WTC11 (cell line): ENCODE measurements at regions of chr11 and their contacts with region 1.

Region 1: DNA sequence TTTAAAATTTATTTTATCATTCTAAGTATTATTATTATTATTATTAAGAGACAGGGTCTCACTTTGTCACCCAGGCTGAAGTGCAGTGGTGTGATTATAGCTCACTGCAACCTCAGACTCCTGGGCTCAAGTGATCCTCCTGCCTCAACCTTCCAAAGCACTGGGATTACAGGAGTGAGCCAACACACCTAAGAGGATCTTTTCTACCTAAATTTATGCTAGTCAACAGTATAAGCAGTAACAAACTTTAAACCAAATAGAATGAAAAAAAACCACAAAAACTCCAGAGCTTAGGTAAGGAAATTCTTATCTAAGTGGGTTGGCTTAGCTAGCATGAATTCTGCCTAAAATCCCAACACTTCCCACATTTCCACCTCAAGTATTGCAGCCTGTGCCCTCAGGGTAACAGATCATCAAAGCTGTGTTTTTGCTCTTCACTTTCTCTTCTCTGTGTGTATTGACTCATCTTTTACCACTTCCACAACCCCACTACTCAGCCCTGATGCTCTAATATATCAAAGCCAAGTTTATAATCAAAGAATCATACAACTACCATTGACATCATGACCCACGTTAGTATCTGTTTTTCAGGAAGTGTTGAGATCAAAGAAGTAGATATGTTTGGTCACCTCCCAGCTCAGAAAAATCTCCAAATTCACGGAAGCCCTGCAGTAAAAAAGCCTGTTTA is 93.7 kb upstream of the SPON1 start:
- DNase-seq: no peak
- ATAC-seq: no peak
- H3K4me3 Mint-ChIP-seq: no peak overlapping the region
- H3K27ac Mint-ChIP-seq: no peak overlapping the region
- H3K4me1 Mint-ChIP-seq: peaks cover 9% of the 10 kb centered on the region
- H3K27me3 Mint-ChIP-seq: no peaks in the 10 kb centered on the region
- CTCF ChIP-seq: no peak

Region 2: DNA sequence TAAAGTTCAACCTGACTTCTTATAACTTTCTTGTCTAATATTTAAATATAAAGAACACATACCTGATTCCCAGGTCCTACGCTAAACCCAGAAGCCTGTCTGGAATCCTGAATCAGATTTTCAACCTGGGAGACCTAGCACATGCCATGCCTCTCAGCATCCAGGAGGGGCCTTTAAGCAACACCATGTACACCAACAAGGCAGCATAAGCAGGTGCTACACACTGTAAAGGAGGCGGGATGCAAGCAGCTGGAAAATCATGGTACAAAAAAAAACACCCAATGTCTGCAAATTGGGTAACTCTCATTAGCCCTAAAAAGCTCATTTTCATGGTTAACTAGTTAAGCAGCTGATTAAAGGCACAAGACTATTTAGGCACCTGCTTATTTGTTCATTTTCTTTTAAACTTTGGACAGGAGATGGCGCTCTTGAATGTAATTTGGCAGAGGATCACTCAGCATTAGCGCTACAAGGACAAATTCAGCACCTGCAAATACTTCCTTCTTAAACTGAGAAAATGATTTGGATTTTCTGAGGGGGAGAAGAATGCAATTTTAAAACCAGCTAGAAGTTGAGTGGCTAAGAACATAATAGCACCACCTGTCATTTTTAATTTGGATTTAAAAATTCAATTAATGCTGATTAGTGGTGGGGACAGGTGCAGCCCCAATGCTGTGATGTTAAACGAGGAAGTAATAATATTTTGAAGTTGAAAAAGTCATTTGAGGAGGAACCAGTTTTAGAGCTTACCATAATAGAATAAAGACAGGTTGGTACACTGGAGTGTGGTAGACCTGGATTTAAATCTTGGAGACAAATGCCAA is 96.4 kb before region 1 on chr11:
- CTCF ChIA-PET with region 1: interaction called, 10 read pairs
- POLR2A ChIA-PET with region 1: interaction called, 3 read pairs
- DNase-seq: no peak
- ATAC-seq: peak; percentile 69
- H3K4me3 Mint-ChIP-seq: no peak overlapping the region
- H3K27ac Mint-ChIP-seq: no peak overlapping the region
- H3K4me1 Mint-ChIP-seq: peaks cover 29% of the 10 kb centered on the region
- H3K27me3 Mint-ChIP-seq: no peaks in the 10 kb centered on the region; the same call in 1 of the 2 replicates
- CTCF ChIP-seq: 0 out of 2 replicates have a peak, but pooled peaks have one; percentile 22

Region 3: GRCh38 chr11:13857828-13858227 is 11.0 kb before region 1 on chr11:
- CTCF ChIA-PET with region 1: interaction called, 10 read pairs
- POLR2A ChIA-PET with region 1: no interaction called
- DNase-seq: no peak
- ATAC-seq: no peak
- H3K4me3 Mint-ChIP-seq: no peak overlapping the region
- H3K27ac Mint-ChIP-seq: no peak overlapping the region
- H3K4me1 Mint-ChIP-seq: no peaks in the 10 kb centered on the region
- H3K27me3 Mint-ChIP-seq: no peaks in the 10 kb centered on the region
- CTCF ChIP-seq: no peak

Region 4: DNA sequence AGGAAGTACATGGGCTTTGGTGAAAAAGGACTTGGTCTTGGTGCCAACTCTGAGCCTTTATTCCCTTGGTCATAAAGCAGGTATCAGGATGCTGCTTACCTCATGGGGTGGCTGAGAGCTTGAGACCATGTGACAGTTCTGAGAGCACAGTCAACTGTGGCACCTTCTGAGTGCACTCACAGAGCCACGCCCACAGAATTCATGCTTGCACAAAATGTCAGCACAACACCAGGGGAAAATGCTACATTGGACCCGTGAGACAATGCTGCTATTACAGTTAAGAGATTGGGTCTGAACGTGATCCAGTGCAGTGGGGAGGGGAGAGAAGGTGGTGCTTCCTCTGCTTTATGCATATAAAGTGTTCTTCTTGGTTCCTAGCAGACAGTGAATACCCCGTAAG is 14.2 kb after region 1 on chr11:
- CTCF ChIA-PET with region 1: interaction called, 15 read pairs
- POLR2A ChIA-PET with region 1: no interaction called
- DNase-seq: no peak
- ATAC-seq: no peak
- H3K4me3 Mint-ChIP-seq: no peak overlapping the region
- H3K27ac Mint-ChIP-seq: no peak overlapping the region
- H3K4me1 Mint-ChIP-seq: no peaks in the 10 kb centered on the region
- H3K27me3 Mint-ChIP-seq: no peaks in the 10 kb centered on the region
- CTCF ChIP-seq: no peak